ENCODE measurements at regions of chr6 and their contacts with region 1.

Region 1: GRCh38 chr6:167350731-167351655 is 26.1 kb downstream of the TTLL2 start:
- DNase-seq: peak; percentile 96
- ATAC-seq: peak; percentile 80
- H3K4me3 Mint-ChIP-seq: peak overlapping the region; percentile 57
- H3K27ac Mint-ChIP-seq: peak overlapping the region; percentile 90
- H3K4me1 Mint-ChIP-seq: peaks cover 27% of the 10 kb centered on the region
- H3K27me3 Mint-ChIP-seq: peaks cover 39% of the 10 kb centered on the region

Region 2: DNA sequence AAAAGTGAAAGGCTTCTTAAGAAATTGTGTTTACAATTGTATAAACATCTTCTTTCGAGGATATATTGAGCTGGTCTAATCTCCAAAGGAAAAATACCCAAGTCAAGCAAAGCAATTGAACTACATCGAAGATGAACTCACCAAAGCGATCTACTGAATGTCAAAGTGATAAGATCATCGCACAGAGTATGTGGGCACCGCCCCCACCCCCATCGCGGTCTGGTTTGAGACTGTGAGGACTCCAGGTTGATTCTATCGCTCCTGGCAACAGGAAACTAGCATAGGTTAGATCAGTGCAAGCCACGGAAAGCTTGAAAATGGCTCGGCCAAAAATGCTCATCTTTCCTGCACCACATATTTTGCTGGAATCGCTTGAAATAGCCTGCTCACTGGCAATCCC is 590.7 kb before region 1 on chr6:
- CTCF ChIA-PET with region 1: no interaction called
- POLR2A ChIA-PET with region 1: no interaction called
- intact Hi-C with region 1: loop called in 1 of 2 experiments (anchors 10 kb)
- DNase-seq: peak; percentile 87
- ATAC-seq: peak; percentile 90
- H3K4me3 Mint-ChIP-seq: no peak overlapping the region
- H3K27ac Mint-ChIP-seq: no peak overlapping the region
- H3K4me1 Mint-ChIP-seq: peaks cover 39% of the 10 kb centered on the region
- H3K27me3 Mint-ChIP-seq: peaks cover 10% of the 10 kb centered on the region

Region 3: DNA sequence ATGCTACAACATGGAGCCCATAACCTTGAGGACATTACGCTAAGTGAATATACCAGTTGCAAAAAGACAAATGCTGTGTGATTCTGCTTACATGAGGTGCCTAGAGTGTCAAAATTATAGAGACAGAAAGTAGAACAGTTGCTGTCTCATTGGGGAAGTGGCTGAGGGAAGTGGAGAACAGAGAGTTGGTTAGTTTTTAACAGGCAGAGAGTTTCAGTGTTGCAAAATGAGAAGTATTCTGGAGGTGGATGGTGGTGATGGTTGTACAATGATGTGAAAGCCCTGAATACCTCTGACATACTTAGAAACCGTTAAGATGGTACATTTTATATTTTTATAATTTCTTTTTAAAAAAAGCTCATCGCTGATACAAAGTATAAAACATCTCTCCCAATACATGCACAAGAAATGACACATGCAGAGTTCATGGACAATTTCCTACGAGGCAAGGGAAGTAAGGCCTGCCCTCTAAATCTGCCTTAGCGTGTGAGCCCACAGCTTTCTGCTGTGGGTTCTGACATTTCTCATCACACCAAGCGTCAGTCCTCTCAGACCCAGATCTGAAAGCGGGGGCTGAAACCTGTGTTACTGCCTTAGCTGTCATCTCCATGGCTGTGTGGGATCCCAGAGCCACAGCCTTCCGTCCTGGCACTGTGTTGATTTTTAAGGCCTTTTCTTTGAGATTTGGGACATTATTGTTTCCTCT is 520.7 kb before region 1 on chr6:
- CTCF ChIA-PET with region 1: no interaction called
- POLR2A ChIA-PET with region 1: no interaction called
- intact Hi-C with region 1: loop called in 1 of 2 experiments (anchors 5 kb)
- DNase-seq: peak; percentile 61
- ATAC-seq: peak; percentile 81
- H3K4me3 Mint-ChIP-seq: no peak overlapping the region
- H3K27ac Mint-ChIP-seq: no peak overlapping the region
- H3K4me1 Mint-ChIP-seq: peaks cover 14% of the 10 kb centered on the region
- H3K27me3 Mint-ChIP-seq: peaks cover 2% of the 10 kb centered on the region

Region 4: DNA sequence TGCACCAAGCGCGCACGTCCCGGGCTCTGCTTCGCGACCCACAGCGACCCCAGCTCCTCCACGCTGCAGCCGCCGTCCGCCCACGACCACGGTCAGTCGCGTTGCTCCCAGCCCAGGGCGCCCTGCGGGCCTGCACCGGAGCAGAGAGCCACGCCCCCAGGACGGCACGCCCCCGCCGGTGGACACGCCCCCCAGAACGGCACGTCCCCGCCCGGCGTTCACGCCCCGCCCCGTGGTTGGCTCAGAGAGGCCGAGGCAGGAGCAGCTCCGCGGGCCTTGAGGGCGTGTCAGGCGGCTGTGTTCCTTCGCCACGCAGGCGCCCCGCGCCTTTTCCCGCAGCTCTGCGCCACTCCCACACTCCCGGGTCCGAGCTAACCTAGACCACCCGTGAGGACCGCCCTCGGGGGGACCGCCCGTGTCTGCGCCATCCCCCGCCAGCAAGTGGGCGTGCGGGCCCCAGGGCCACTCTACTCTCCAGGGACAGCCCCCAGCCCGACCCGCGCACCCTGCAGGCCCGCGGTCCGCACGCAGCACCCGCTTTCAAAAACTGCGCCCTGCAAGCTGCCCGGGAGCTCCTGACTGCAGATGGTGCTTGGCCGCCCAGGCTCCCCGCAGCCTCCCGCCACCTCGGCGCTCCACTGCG is 394.4 kb before region 1 on chr6 and contains the start of gene RNASET2:
- CTCF ChIA-PET with region 1: interaction called, 3 read pairs
- POLR2A ChIA-PET with region 1: no interaction called
- intact Hi-C with region 1: loop called in 1 of 2 experiments (anchors 2 kb)
- DNase-seq: peak; percentile 100
- ATAC-seq: peak; percentile 80
- H3K4me3 Mint-ChIP-seq: peak within 1 kb of the TSS; percentile 94
- H3K27ac Mint-ChIP-seq: peak within 1 kb of the TSS; percentile 97
- H3K4me1 Mint-ChIP-seq: peaks cover 69% of the 10 kb centered on the region
- H3K27me3 Mint-ChIP-seq: no peaks in the 10 kb centered on the region
- total RNA-seq, gene RNASET2: 68.7 to 85.2 TPM

Region 5: GRCh38 chr6:167212713-167213005 is 138.3 kb before region 1 on chr6:
- CTCF ChIA-PET with region 1: interaction called, 12 read pairs
- POLR2A ChIA-PET with region 1: no interaction called
- intact Hi-C with region 1: no loop called
- DNase-seq: peak; percentile 19
- ATAC-seq: peak; percentile 88
- H3K4me3 Mint-ChIP-seq: no peak overlapping the region
- H3K27ac Mint-ChIP-seq: no peak overlapping the region
- H3K4me1 Mint-ChIP-seq: peaks cover 2% of the 10 kb centered on the region
- H3K27me3 Mint-ChIP-seq: peaks cover 3% of the 10 kb centered on the region

Region 6: GRCh38 chr6:167219967-167220512 is 131.0 kb before region 1 on chr6:
- CTCF ChIA-PET with region 1: interaction called, 12 read pairs
- POLR2A ChIA-PET with region 1: no interaction called
- intact Hi-C with region 1: loop called in 1 of 2 experiments (anchors 1 kb)
- DNase-seq: no peak
- ATAC-seq: no peak
- H3K4me3 Mint-ChIP-seq: no peak overlapping the region
- H3K27ac Mint-ChIP-seq: no peak overlapping the region
- H3K4me1 Mint-ChIP-seq: no peaks in the 10 kb centered on the region
- H3K27me3 Mint-ChIP-seq: peaks cover 2% of the 10 kb centered on the region

Region 7: GRCh38 chr6:167329014-167329413 is 22.0 kb before region 1 on chr6:
- CTCF ChIA-PET with region 1: interaction called, 22 read pairs
- POLR2A ChIA-PET with region 1: interaction called, 4 read pairs
- intact Hi-C with region 1: loop called (anchors 2 kb)
- DNase-seq: peak; percentile 55
- ATAC-seq: peak; percentile 97
- H3K4me3 Mint-ChIP-seq: no peak overlapping the region
- H3K27ac Mint-ChIP-seq: no peak overlapping the region
- H3K4me1 Mint-ChIP-seq: peaks cover 9% of the 10 kb centered on the region
- H3K27me3 Mint-ChIP-seq: peaks cover 12% of the 10 kb centered on the region

Region 8: GRCh38 chr6:168201383-168201782 is 850.4 kb after region 1 on chr6:
- CTCF ChIA-PET with region 1: no interaction called
- POLR2A ChIA-PET with region 1: no interaction called
- intact Hi-C with region 1: no loop called
- DNase-seq: no peak
- ATAC-seq: no peak
- H3K4me3 Mint-ChIP-seq: no peak overlapping the region
- H3K27ac Mint-ChIP-seq: no peak overlapping the region
- H3K4me1 Mint-ChIP-seq: no peaks in the 10 kb centered on the region
- H3K27me3 Mint-ChIP-seq: peaks cover 2% of the 10 kb centered on the region

Measured in activated CD4-positive, alpha-beta T cell treated with anti-CD3 and anti-CD28 coated beads for 36 hours (primary cell).